ENCODE measurements at regions of chr15 and their contacts with region 1.

Region 1: DNA sequence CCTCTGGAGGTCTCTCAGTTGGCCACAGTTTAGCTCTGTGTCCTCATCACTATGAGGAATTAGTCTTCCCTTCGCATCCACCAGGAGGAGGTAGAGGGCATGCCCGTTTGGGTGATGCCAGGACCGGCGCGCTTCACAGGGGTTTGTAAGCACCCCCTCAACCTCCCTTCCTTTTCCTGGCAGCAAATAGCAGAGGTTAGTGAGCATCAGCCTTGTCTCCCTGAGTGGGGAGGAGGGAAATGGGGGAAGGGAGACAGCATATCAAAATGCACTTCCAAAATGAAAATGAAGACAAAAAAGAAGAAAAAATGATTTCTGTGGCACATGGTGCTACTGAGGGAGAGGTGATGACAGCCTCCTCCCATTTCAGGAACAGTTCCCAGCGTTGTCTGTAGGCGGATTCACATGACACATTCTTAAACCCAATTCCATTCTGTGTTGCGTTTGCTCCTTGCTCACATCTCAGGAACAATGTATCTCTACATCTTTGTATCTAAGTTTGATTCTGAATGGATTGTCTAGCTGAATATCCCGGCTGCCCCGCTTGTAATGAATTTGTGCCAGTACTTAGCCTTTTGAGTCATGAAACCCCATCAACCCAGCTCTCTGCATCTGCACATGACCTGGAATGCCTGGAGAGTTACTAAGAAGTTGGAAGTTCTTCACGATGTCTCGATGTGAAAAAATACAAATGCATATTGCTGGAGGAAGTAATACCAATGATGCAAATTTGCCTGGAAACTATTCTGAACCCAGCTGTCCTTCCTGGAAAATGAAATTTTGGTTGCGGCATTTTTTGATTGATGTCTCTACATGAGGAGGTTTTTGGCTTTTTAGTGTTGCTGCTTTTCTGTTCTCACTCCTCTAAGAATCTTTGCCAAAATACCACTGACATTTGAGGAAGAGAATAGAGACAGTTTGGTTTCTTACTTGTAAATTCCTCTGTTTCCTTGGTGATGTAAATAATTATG is 45.2 kb downstream of the TYRO3 start:
- DNase-seq: peak; percentile 63
- ATAC-seq: peak; percentile 95
- H3K4me3 ChIP-seq: peak overlapping the region in 1 of 3 experiments; percentile 47; a peak in 2 of 6 replicates
- H3K27ac ChIP-seq: no peak overlapping the region
- H3K4me1 ChIP-seq: peaks cover 23% of the 10 kb centered on the region
- H3K27me3 ChIP-seq: no peaks in the 10 kb centered on the region
- CTCF ChIP-seq: peak; percentile 86
- EP300 ChIP-seq: no peak
- POLR2A ChIP-seq: no peak
- RAD21 ChIP-seq: peak; percentile 78

Region 2: DNA sequence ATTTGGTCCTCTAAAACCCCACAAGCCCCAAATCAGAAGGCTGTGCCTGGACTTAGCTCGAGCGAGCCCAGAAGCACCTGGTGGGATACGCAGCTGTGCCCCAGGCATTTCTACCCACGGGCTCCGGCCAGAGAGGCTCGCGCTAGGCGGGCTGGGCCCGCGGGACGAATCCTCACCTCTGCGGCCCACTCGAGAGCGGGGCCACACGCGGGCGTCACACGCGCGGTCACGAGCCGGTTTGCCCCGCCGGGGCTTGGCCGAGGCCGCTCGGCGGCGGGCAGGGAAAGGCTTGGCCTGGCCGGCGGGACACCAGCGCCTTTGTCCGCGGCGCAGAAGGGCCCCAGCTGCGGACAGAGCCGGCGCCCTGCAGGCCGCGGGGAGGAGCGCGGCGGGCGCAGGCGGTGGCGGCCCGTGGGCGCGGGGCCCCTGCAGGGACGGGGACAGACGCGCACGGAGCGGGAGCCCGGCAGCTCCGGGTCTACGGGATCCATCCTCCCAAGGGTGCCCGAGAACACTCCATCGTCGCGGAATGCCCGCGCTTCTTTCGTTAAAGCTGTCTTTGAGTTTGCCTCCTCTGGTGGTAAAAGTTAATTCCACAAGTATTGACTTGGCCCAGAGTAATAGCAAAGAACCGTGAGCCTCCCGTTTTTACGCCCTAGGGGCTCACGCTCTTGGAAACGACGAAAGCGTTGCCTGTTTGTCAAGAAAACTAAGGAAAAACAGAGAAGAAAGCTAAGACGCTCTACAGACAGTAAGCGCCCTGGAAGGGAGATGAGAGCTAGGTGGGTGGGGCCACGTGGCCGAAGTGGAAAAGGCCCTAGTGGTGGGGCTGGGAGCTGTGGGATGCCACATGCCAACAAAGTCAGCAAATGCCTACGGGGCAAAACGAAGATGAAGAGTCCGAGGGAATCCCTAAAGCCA is 18.8 kb before region 1 on chr15:
- CTCF ChIA-PET with region 1: no interaction called
- POLR2A ChIA-PET with region 1: no interaction called
- in situ Hi-C with region 1: no loop called
- intact Hi-C with region 1: loop called (anchors 2 kb)
- DNase-seq: no peak
- ATAC-seq: peak; percentile 91
- H3K4me3 ChIP-seq: peak overlapping the region; percentile 57 to 70 (median 57); a peak in 5 of 6 replicates
- H3K27ac ChIP-seq: peak overlapping the region; percentile 61
- H3K4me1 ChIP-seq: peaks cover 20% of the 10 kb centered on the region
- H3K27me3 ChIP-seq: no peaks in the 10 kb centered on the region
- CTCF ChIP-seq: 0 out of 2 replicates have a peak, but pooled peaks have one; percentile 24
- EP300 ChIP-seq: no peak
- POLR2A ChIP-seq: no peak
- RAD21 ChIP-seq: peak; percentile 48

Region 3: DNA sequence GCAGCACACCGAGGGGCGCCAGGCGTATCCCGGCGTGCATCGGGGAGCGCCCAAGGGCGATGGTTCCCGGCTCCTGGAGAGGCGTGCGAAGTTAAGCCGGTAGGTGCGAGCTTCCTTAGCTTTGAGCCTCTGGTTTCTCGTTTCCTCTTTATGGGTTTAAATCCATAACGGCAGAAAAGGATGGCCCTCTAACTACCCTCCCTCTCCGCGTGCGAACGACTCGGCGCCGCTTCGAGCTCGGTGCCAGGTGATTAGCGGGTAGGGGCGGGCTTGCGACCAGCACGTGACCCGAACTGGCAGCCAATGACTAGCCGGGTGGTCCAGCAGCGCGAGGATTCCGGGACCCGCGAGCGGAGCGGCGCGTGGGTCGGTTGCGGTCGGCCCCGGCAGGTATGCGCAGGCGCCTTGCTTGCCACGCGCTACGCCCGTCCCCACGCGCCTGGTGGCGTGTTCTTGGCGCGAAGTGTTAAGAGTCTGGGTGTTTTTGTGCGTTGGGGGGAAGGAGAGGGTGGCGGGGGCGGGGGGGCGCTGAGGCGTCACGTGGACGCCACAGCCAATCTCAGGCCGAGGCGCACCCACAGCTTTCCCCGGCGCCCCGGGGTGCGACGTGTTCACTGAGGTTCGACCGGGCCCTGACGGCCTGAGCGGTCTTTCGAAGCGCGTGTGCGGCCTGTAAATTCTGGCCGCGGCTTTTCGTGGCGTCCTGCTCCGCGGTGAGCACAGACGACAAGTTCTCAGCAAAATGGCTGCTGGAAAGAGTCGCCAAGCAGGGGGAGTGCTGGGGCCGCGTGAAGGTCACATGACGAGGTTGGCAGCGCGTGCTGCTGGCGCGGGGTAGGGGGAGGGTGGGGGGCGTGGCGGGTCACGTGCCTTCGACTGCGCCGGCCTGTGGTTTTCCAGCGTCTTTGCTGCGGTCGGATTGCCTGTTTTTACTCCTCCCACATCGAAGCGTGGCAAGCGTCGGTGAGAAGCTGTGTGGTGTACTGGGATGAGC is 17.3 kb after region 1 on chr15:
- CTCF ChIA-PET with region 1: no interaction called
- POLR2A ChIA-PET with region 1: interaction called, 16 read pairs
- in situ Hi-C with region 1: no loop called
- intact Hi-C with region 1: no loop called
- DNase-seq: peak; percentile 78
- ATAC-seq: peak; percentile 95
- H3K4me3 ChIP-seq: peak overlapping the region; percentile 36 to 63 (median 59); a peak in 5 of 6 replicates
- H3K27ac ChIP-seq: peak overlapping the region; percentile 83
- H3K4me1 ChIP-seq: peaks cover 26% of the 10 kb centered on the region
- H3K27me3 ChIP-seq: no peaks in the 10 kb centered on the region
- CTCF ChIP-seq: no peak
- EP300 ChIP-seq: peak in 1 of 2 experiments; percentile 38; a peak in 1 of 4 replicates
- POLR2A ChIP-seq: peak; percentile 60 to 81
- RAD21 ChIP-seq: peak; percentile 10; the same call in 1 of the 2 replicates